Ascending aorta (tissue), 2 donors: ENCODE measurements at regions of chr11 and their contacts with region 1.

Region 1: DNA sequence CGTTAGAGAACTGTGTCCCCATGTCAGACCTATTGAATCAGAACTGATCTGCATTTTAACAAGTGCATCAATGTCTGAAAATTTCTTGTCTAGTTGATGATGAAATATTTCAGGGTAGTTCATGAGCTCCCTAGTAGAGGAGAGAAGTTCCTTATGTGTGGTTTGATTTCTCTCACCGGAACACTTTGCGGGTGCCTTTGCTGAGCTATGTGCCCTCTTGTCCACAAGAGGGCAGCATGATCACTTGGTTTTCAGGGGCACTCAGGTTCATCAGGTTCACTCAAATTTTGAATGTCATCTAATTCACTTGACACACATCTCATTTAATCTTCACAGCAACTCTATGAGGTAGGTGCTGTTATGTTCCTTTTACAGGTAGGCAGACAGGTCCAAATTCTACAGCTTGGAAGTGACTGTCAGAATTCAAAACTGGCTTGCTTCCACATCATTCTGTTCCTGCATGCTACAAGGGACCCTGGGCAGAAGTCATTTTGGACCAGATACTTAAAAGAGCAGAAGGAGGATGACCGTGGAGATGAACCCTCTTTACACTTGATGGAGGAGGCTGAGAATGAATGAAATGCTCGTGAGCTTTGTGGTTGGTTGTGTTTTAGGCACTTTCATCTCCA is 55.6 kb downstream of the P4HA3 start:
- DNase-seq: peak in 1 of 2 donors; percentile 71
- H3K4me3 ChIP-seq: no peak overlapping the region
- H3K27ac ChIP-seq: no peak overlapping the region
- H3K4me1 ChIP-seq: peaks cover 0 to 15% of the 10 kb centered on the region in 2 donors
- H3K27me3 ChIP-seq: no peaks in the 10 kb centered on the region
- CTCF ChIP-seq: peak; percentile 78 to 93 (median 90)

Region 2: DNA sequence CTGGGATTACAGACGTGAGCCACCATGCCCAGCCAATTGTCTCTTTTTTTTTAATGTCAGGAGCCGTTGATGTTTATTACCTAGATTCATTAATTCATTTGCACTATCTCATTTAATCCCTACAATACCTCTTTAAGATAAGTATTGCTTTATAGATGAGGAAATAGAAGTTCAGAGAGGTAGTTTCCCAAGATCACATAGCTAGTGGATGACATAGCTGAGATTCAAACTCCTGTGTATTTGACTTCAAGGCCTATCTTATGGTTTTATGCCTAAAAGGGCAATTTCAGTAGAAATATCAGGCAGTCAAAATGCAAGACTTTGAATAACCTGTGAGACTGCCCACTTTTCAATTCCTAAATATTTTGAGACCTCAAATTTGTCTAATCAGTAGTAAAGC is 18.3 kb before region 1 on chr11:
- intact Hi-C with region 1: no loop called
- DNase-seq: no peak
- H3K4me3 ChIP-seq: no peak overlapping the region
- H3K27ac ChIP-seq: no peak overlapping the region
- H3K4me1 ChIP-seq: no peaks in the 10 kb centered on the region
- H3K27me3 ChIP-seq: no peaks in the 10 kb centered on the region
- CTCF ChIP-seq: no peak

Region 3: DNA sequence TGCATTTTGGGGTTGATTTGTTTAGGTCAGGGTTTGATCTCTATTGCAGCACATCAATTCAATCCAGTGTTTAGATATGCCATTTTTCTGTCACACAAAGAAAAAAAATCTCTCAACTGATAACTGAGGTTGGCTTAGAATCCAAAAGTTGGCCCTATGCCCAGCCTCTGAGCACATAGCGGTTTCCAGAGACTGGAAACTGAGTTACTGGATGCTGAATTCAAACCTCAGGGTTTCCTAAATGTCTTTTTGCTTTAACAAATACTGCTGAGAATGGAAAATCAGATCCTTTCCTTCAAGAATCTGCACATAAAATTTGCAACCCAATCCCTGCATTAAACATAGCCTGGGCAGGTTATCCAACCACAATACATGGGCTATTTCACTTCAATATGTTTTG is 51.6 kb after region 1 on chr11:
- intact Hi-C with region 1: loop called (anchors 5 kb)
- DNase-seq: no peak
- H3K4me3 ChIP-seq: no peak overlapping the region
- H3K27ac ChIP-seq: no peak overlapping the region
- H3K4me1 ChIP-seq: peaks cover 0 to 6% of the 10 kb centered on the region in 2 donors
- H3K27me3 ChIP-seq: no peaks in the 10 kb centered on the region
- CTCF ChIP-seq: no peak

Region 4: DNA sequence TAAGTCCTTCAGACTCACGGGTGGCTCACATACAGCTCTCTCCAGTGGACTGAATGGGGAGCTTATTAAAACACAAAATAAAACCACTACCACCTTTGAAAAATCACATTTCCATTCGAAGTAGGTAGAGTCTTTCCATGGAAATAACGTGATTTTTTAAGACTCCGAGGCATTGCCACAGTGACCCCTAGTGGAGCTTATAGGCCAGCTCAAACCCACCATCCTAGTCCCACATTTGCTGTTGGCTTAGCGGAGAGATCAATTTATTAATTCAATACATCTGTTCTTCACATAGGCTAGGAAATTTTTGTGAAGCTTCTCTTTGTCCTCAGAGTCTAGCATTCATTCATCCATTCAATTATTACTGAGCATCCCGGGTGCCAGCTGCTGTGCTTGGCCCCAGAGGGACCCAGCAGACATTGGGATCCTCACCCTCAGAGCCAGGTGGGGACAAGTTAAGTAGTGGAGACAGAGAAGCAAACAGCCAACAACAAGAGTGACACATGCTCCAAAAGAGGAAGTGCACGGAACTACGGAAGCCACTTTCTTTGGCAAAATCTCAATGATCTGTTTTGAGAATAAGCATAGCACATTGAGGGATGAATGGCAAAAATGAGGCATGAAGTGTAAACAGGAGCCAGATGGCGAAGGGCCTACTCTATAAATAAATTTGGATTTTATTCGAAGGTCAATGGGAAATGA is 65.8 kb after region 1 on chr11:
- intact Hi-C with region 1: loop called (anchors 5 kb)
- DNase-seq: peak in 1 of 2 donors; percentile 77
- H3K4me3 ChIP-seq: no peak overlapping the region
- H3K27ac ChIP-seq: peak overlapping the region; percentile 7 to 57
- H3K4me1 ChIP-seq: peaks cover 6 to 43% of the 10 kb centered on the region in 2 donors
- H3K27me3 ChIP-seq: no peaks in the 10 kb centered on the region
- CTCF ChIP-seq: peak in 1 of 3 experiments; percentile 60

Region 5: DNA sequence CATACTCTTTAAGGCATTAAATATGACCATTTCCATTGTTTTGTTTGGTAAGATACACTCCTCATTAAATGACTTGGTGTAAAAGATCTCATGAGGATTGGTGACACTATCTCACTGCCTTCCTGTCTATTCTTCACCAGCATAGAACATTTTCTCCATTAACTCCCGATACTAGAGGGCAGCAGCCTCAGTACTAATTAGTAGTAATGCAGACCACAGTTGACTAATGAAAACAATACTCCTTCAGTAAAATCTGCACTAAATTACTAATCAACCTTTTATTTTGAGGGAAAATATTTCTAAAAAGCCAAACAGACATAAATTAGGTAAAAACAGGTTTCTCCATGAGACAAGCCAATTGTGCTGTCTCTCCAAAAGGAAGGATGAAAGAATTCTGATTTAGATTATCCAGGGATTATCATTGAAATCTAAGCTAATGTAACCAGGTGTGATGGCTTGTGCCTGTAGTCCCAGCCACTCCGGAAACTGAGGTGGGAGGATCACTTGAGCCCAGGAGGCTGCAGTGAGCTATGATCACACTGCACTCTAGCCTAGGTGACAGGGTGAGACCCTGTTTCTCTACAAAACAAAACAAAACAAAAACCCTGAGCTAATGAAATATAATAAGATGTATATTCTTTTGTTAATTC is 132.9 kb after region 1 on chr11:
- intact Hi-C with region 1: loop called (anchors 1 kb)
- DNase-seq: peak in 1 of 2 donors; percentile 78
- H3K4me3 ChIP-seq: no peak overlapping the region
- H3K27ac ChIP-seq: no peak overlapping the region
- H3K4me1 ChIP-seq: peaks cover 0 to 3% of the 10 kb centered on the region in 2 donors
- H3K27me3 ChIP-seq: no peaks in the 10 kb centered on the region
- CTCF ChIP-seq: peak; percentile 47 to 71 (median 65)

Region 6: DNA sequence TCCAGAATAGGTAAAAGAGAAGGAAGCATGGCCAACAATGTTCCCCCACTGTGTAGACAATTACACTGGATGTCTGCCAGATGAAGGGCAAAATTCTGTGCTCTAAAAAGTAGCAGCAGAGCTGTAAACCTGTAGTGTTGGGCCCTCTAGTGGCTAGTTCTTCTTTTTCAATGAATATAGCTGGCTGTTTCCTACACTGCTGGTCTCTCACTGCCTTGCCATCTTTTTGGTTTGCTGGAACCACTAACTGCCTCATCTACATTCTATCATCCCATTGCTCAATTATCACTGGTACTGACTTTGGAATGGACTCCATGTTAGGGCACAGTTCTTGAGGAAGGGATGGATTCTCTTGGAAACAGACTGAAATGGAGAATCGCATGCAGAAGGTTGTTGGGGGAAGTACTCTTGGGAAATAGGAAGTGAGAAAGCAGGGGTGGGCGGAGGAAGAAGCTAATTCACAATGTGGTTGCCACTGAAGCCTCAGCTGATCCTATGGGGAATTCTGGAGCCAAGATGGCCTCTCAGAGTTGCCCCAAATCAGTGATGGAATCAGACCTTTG is 193.6 kb after region 1 on chr11:
- intact Hi-C with region 1: loop called (anchors 1 kb)
- DNase-seq: peak in 1 of 2 donors; percentile 71
- H3K4me3 ChIP-seq: no peak overlapping the region
- H3K27ac ChIP-seq: no peak overlapping the region
- H3K4me1 ChIP-seq: no peaks in the 10 kb centered on the region
- H3K27me3 ChIP-seq: no peaks in the 10 kb centered on the region
- CTCF ChIP-seq: peak; percentile 61 to 88 (median 73)

Region 7: DNA sequence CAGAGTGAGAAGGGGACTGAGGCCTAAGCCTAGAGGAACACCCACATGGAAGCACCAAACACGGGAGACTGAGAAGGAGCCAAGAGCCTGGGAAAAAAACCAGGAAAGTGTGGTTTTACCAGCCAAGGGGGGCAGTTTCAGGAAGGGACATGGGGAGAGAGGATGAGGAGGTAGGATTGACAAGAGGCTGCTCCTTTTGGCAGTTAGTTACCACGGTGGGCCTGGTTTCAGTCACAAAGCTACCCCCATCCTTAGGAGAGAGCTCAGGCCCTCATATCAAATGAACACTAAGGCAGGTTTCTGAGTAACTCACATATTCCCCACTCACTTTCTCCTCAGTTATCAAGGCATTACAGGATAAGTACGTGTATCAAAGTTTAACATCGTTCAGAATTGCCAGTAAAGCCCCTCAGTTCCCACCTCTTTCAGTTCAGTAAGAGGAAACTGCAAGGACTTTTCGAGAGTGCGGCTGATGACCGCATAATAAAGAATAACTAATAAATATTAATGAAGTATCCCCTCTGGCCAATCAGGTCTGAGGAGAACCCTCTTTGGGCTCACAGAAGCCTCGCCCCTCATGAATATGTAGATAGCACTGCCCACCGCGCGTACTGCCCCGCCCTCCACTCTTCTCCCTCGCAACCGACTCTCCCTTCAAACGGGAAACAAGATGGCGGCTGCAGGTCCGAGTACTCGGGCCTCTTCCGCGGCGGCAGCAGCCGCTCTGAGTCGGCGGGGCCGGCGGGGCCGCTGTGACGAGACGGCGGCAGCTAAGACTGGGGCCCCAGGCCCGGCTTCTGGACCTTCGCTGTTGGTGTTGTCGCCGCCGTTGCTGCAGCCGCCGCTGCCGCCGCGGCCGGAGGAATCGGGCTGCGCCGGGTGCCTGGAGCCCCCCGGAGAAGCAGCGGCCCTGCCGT is 492.6 kb after region 1 on chr11 and contains the start of gene RNF169:
- intact Hi-C with region 1: loop called (anchors 10 kb)
- DNase-seq: peak; percentile 90 to 98
- H3K4me3 ChIP-seq: peak within 1 kb of the TSS; percentile 72 to 97
- H3K27ac ChIP-seq: peak within 1 kb of the TSS; percentile 89 to 91
- H3K4me1 ChIP-seq: peaks cover 0 to 16% of the 10 kb centered on the region in 2 donors
- H3K27me3 ChIP-seq: no peaks in the 10 kb centered on the region
- CTCF ChIP-seq: no peak
- total RNA-seq, gene RNF169: 19.5 TPM